ENCODE measurements at regions of chr14 and their contacts with region 1.

Region 1: DNA sequence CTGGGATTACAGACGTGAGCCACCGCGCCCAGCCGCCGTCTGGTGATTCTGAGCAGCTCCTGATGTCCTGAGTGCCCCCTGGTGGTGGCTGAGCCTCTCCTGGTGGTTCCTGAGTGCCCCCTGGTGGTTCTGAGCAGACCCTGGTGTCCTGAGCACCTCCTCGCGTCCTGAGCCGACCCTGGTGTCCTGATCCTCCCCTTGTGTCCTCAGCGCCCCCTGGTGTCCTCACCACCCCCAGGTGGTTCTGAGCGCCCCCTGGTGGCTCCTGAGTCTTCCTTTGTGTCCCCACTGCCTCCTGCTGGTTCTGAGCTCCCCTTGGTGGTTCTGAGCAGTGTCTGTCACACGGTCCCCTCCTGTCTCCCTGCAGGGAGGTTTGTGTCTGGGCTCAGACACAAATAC is 1304.9 kb downstream of the TMEM121 start:
- DNase-seq: peak; percentile 82
- H3K4me3 Mint-ChIP-seq: no peak overlapping the region
- H3K27ac Mint-ChIP-seq: no peak overlapping the region
- H3K4me1 Mint-ChIP-seq: no peaks in the 10 kb centered on the region
- H3K27me3 Mint-ChIP-seq: peaks cover 6% of the 10 kb centered on the region

Region 2: GRCh38 chr14:106665814-106666213 is 165.5 kb before region 1 on chr14:
- CTCF ChIA-PET with region 1: interaction called, 10 read pairs
- POLR2A ChIA-PET with region 1: no interaction called
- intact Hi-C with region 1: no loop called
- DNase-seq: no peak
- H3K4me3 Mint-ChIP-seq: no peak overlapping the region
- H3K27ac Mint-ChIP-seq: no peak overlapping the region
- H3K4me1 Mint-ChIP-seq: peaks cover 22% of the 10 kb centered on the region
- H3K27me3 Mint-ChIP-seq: peaks cover 11% of the 10 kb centered on the region

Region 3: DNA sequence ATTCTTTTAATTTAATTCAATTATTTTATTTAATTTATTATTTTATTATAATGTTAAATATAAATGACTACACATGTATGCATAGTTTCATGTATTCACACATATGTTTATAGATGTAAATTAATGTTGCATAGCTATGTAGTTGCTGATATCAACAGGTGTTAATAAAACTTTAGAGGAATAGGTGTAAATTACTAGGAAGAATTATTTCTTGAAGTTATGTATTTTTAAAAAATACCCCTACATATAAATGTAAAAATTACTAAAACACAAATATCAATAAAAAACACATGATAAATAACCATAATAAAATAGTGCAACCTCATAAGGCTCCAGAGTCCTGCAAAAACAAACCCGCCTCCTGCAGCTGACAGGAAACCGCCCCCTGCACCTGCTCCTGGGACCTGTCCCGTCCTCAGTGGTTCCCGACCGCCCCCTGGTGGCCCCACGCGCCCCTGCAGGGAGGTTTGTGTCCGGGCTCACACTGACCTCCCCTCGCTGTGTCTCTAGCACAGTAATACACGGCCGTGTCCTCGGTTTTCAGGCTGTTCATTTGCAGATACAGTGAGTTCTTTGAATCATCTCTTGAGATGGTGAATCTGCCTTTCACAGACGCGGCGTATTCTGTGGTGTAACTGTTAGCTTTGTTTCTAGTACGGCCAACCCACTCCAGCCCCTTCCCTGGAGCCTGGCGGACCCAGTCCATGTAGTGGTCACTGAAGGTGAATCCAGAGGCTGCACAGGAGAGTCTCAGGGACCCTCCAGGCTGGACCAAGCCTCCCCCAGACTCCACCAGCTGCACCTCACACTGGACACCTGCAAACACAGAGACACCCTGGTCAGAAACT is 40.9 kb before region 1 on chr14:
- CTCF ChIA-PET with region 1: interaction called, 30 read pairs
- POLR2A ChIA-PET with region 1: no interaction called
- intact Hi-C with region 1: no loop called
- DNase-seq: peak; percentile 88
- H3K4me3 Mint-ChIP-seq: no peak overlapping the region
- H3K27ac Mint-ChIP-seq: no peak overlapping the region
- H3K4me1 Mint-ChIP-seq: peaks cover 4% of the 10 kb centered on the region
- H3K27me3 Mint-ChIP-seq: peaks cover 11% of the 10 kb centered on the region

Region 4: DNA sequence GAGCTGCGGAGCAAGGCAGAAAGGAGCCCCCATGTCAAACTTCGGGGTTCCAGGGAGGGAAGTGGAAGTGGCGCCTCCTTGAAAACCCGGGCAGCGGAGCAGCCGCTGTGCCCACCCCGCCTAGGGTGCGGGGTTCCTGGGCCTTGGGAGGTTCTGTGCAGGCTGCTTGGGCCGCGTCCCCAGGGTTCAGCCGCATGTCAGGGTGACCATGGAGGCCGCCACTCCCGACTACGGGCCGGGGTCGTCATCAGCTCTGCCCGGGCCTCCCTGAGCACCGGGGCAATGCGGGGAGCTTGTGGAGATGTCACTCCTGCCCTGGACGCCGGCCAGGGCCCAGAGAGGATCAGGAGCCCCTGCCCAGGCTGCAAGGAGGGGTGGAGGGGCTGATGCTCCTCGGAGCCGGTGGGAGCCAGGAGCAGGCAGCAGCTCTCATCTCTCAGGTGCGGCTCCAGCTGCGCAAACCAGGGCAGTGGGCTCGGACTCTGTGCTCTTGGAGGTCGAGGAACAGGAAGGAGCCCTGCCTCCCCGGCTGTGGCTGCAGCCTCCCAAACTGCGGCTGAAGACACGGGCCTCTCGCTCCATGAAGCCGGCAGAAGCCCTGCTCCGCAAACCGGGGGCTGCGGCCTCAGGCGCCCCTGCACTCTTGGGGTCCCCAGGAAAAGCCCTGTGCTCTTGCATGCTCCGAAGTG is 18.4 kb before region 1 on chr14:
- CTCF ChIA-PET with region 1: interaction called, 26 read pairs
- POLR2A ChIA-PET with region 1: no interaction called
- intact Hi-C with region 1: no loop called
- DNase-seq: no peak
- H3K4me3 Mint-ChIP-seq: no peak overlapping the region
- H3K27ac Mint-ChIP-seq: no peak overlapping the region
- H3K4me1 Mint-ChIP-seq: peaks cover 10% of the 10 kb centered on the region
- H3K27me3 Mint-ChIP-seq: peaks cover 2% of the 10 kb centered on the region

Region 5: DNA sequence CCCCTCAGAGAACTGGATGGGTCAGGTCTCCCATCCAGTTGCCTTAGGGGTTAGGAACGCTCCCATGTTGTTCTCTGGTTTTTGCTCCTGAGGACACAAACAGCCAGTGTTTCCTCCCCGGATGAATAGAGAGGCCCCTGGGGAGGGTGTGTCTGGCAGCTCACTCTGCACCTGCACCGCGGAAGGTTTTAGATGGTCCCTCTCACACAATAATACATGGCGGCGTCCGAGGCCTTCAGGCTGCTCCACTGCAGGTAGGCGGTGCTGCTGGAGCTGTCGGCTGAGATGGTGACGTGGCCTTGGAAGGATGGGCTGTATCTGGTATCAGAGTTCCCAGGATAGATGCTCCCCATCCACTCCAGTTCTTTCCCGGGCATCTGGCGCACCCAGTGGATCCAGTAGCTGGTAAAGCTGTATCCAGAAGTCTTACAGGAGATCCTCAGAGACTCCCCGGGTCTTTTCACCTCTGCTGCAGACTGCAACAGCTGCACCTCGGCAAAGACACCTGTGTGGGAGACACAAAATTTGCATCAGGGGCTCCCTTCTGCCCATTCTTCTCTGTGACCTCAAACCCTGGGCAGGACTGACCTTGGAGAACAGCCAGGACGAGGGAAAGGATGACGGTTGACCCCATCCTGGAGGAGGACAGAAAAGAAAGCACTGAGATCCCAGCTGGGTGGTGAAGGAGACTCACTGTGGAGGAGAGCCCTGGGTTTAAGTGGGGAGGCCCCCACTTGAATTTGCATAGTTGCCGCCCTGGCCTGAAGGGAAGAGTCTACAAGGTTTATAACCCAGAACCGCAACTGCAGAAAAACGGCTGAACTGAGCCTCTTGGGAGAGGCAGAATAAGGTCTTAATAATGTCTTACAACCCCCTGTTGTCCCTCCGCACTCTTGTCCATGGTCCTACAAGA is 19.8 kb after region 1 on chr14:
- CTCF ChIA-PET with region 1: interaction called, 33 read pairs
- POLR2A ChIA-PET with region 1: no interaction called
- intact Hi-C with region 1: no loop called
- DNase-seq: no peak
- H3K4me3 Mint-ChIP-seq: no peak overlapping the region
- H3K27ac Mint-ChIP-seq: no peak overlapping the region
- H3K4me1 Mint-ChIP-seq: peaks cover 7% of the 10 kb centered on the region
- H3K27me3 Mint-ChIP-seq: peaks cover 2% of the 10 kb centered on the region

Measured in activated CD4-positive, alpha-beta memory T cell treated with anti-CD3 and anti-CD28 coated beads for 36 hours (primary cell).